Right cardiac atrium (tissue), 5 donors: ENCODE measurements at regions of chr12 and their contacts with region 1.

Region 1: DNA sequence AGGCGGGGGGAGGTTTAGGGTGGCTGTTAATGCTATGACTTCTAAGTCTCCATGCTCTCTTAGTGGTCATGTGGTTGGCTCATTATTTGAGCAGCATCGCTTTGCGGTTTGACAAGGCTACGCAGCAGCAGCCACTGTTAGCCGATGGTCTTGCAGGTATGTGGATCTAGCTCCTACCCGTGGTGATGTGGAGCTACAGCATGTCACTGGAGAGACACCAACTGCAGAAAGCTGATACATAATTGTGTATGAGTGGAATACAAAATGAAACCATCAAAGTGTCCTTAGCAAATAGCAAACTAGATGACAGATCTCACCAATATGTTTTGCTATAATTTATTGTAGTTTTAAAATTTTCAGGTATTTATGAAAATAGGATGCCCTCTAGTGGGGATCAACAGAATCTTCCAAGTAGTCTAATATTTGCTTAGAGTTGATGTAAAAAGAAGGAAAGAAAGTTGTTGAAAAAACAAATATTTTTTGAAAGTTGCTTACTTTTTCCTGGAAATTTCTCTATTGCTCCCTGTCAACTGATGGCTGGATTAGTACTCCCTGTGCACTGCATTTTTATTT is 94.9 kb downstream of the NAV3 start:
- DNase-seq: peak; percentile 75 to 84 (median 76)
- ATAC-seq: peak; percentile 91 to 97
- H3K4me3 ChIP-seq: no peak overlapping the region
- H3K27ac ChIP-seq: no peak overlapping the region
- H3K4me1 ChIP-seq: no peaks in the 10 kb centered on the region
- H3K27me3 ChIP-seq: no peaks in the 10 kb centered on the region

Region 2: GRCh38 chr12:77724367-77724957 is 201.2 kb before region 1 on chr12:
- intact Hi-C with region 1: loop called (anchors 2 to 10 kb)
- DNase-seq: no peak
- ATAC-seq: peak; percentile 64 to 71
- H3K4me3 ChIP-seq: no peak overlapping the region
- H3K27ac ChIP-seq: no peak overlapping the region
- H3K4me1 ChIP-seq: peaks cover 3% of the 10 kb centered on the region
- H3K27me3 ChIP-seq: no peaks in the 10 kb centered on the region